MCF 10A (cell line): ENCODE measurements at regions of chr20 and their contacts with region 1.

Region 1: GRCh38 chr20:17995967-17996819 is 27.4 kb downstream of the MGME1 start:
- DNase-seq: peak; percentile 75
- H3K4me3 Mint-ChIP-seq: no peak overlapping the region
- H3K27ac Mint-ChIP-seq: no peak overlapping the region
- H3K4me1 Mint-ChIP-seq: peaks cover 14% of the 10 kb centered on the region
- H3K27me3 Mint-ChIP-seq: no peaks in the 10 kb centered on the region
- CTCF ChIP-seq: peak; percentile 89

Region 2: DNA sequence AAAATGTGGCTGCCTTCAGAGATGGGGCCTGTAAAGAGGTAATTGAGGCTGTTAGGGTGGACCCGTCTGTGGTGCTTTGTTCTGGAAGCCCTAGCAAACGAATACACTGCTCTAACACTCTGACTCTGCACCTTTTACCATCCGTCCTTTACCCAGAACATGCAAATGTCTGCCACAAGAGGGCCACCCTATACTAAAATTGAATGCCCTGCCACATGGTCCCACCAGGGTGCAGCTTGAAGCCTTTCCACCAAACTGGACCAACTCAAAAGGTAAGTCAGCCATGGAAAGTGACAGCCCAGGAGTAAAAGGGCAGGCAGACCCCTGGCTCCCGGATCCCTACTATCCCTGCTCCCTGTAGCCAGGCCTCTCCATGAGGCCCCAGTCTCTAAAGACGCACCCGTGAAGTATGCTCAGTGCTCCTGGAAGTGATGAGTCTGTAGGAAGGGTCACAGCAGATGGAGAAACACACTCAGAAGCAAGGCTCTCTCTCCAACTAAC is 459.2 kb before region 1 on chr20:
- CTCF ChIA-PET with region 1: interaction called, 6 read pairs
- POLR2A ChIA-PET with region 1: no interaction called
- intact Hi-C with region 1: loop called (anchors 10 kb)
- DNase-seq: peak; percentile 83
- H3K4me3 Mint-ChIP-seq: no peak overlapping the region
- H3K27ac Mint-ChIP-seq: no peak overlapping the region
- H3K4me1 Mint-ChIP-seq: peaks cover 20% of the 10 kb centered on the region
- H3K27me3 Mint-ChIP-seq: no peaks in the 10 kb centered on the region
- CTCF ChIP-seq: peak; percentile 84

Region 3: GRCh38 chr20:17771206-17772004 is 224.8 kb before region 1 on chr20:
- CTCF ChIA-PET with region 1: no interaction called
- POLR2A ChIA-PET with region 1: no interaction called
- intact Hi-C with region 1: no loop called
- DNase-seq: no peak
- H3K4me3 Mint-ChIP-seq: no peak overlapping the region
- H3K27ac Mint-ChIP-seq: no peak overlapping the region
- H3K4me1 Mint-ChIP-seq: no peaks in the 10 kb centered on the region
- H3K27me3 Mint-ChIP-seq: no peaks in the 10 kb centered on the region
- CTCF ChIP-seq: no peak

Region 4: GRCh38 chr20:17946572-17947473 is 49.4 kb before region 1 on chr20:
- CTCF ChIA-PET with region 1: interaction called, 13 read pairs
- POLR2A ChIA-PET with region 1: no interaction called
- intact Hi-C with region 1: no loop called
- DNase-seq: no peak
- H3K4me3 Mint-ChIP-seq: no peak overlapping the region
- H3K27ac Mint-ChIP-seq: peak overlapping the region; percentile 22
- H3K4me1 Mint-ChIP-seq: no peaks in the 10 kb centered on the region
- H3K27me3 Mint-ChIP-seq: no peaks in the 10 kb centered on the region
- CTCF ChIP-seq: no peak

Region 5: DNA sequence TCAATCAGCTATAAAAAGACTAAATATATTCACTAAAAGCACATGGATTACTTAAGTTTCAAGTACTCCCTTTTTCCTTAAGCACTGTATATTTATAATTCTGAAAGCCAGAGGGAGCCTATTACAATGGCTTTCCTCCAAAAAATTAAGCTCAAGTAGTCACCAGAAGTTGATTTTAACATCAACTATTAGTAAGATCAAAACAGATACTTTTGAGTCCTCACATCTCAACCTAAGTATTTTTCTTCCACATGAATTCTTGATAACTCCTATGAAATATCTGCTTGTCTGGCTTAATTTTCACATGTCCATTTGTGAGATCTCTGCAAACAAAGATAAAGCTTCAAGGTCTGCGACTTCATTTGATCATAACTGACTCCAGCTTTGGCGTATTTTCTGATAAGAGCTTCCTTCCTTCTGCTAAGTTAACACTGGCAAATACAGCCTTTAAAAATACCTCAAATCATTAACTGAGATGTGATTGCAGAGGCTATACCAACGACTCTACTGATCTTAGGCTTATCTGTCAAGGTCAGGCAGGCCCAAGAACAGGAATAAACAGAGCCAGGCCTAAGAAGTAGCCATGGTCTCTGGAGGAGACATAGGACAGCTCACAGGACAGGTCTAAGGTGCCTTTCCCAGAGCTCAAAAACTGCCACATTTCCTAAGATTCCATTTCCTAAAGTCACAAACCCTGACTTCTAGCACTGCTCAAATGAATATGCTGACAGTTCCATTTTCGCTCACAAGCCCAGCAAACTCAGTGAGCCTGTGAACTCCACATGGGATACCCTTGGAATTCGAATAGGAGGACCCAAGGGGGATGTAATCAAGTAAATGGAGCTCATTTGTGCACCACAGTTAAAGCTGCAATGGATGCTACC is 37.6 kb before region 1 on chr20:
- CTCF ChIA-PET with region 1: interaction called, 56 read pairs
- POLR2A ChIA-PET with region 1: interaction called, 23 read pairs
- intact Hi-C with region 1: no loop called
- DNase-seq: no peak
- H3K4me3 Mint-ChIP-seq: no peak overlapping the region
- H3K27ac Mint-ChIP-seq: peak overlapping the region; percentile 82
- H3K4me1 Mint-ChIP-seq: peaks cover 33% of the 10 kb centered on the region
- H3K27me3 Mint-ChIP-seq: no peaks in the 10 kb centered on the region
- CTCF ChIP-seq: no peak

Region 6: DNA sequence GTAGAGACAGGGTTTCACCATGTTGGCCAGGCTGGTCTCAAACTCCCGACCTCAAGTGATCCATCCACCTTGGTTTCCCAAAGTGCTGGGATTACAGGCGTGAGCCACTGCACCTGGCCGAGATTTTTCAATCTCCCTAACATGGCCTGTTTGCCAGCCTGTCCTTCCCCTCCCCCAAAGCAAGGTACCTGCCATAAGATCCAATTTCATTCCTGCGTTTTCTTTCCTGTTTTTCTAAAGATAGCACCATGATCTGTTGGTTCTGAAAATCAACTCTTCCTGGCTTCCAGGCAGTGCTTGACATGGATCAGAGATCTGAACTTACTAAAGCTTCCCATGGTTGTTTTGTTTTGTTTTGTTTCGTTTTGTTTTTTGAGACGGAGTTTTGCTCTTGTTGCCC is 19.9 kb before region 1 on chr20:
- CTCF ChIA-PET with region 1: interaction called, 68 read pairs
- POLR2A ChIA-PET with region 1: interaction called, 20 read pairs
- intact Hi-C with region 1: no loop called
- DNase-seq: no peak
- H3K4me3 Mint-ChIP-seq: no peak overlapping the region
- H3K27ac Mint-ChIP-seq: no peak overlapping the region
- H3K4me1 Mint-ChIP-seq: peaks cover 11% of the 10 kb centered on the region
- H3K27me3 Mint-ChIP-seq: no peaks in the 10 kb centered on the region
- CTCF ChIP-seq: no peak

Region 7: GRCh38 chr20:17985388-17986018 is 10.7 kb before region 1 on chr20:
- CTCF ChIA-PET with region 1: interaction called, 64 read pairs
- POLR2A ChIA-PET with region 1: interaction called, 5 read pairs
- intact Hi-C with region 1: no loop called
- DNase-seq: no peak
- H3K4me3 Mint-ChIP-seq: no peak overlapping the region
- H3K27ac Mint-ChIP-seq: no peak overlapping the region
- H3K4me1 Mint-ChIP-seq: no peaks in the 10 kb centered on the region
- H3K27me3 Mint-ChIP-seq: no peaks in the 10 kb centered on the region
- CTCF ChIP-seq: no peak

Region 8: DNA sequence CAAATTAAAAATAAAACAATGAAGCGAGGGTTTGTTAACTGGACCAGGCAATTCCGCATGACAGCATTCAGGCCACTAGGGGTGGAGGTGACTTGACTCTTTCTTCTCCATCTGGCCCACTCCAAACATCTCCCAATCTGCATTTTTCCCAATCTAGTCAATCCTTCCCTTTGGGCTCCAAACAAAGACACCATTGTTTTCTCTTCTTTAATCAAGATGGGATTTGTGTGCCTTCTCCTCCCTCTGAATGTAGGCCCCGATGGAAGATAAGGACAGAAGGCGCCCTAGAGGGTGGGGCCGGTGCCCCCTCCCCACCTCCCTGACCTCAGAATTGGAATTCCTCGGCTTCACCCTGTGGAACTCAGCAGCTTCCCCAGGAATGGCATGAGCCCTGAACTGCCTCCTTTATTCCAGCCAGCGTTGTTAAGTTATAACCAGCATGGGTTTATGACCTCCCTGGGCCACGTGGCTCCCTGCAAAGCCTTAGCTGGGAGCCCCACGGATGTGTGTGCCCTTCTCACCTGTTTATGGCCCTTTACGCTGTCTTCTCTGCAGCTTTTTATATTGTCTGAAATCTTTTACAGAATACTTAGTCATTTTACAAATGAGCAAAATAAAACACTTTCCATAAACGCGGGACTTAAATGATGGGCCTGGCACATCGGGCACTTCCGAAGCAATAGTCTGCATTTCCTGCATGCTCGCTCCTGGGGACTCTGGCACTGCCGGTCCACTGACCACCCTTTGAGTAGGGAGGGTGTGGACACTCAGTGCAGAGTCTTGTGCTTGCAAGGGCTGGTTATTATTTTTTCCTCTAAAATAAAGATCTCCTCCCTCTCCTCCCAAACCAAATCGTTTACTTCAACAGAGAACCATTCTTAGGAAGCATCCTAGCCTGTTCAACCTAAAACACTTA is 37.0 kb after region 1 on chr20:
- CTCF ChIA-PET with region 1: no interaction called
- POLR2A ChIA-PET with region 1: no interaction called
- intact Hi-C with region 1: no loop called
- DNase-seq: no peak
- H3K4me3 Mint-ChIP-seq: no peak overlapping the region
- H3K27ac Mint-ChIP-seq: no peak overlapping the region
- H3K4me1 Mint-ChIP-seq: peaks cover 5% of the 10 kb centered on the region
- H3K27me3 Mint-ChIP-seq: no peaks in the 10 kb centered on the region
- CTCF ChIP-seq: no peak